Activated CD4-positive, alpha-beta memory T cell treated with anti-CD3 and anti-CD28 coated beads for 36 hours (primary cell): ENCODE measurements at regions of chr15 and their contacts with region 1.

Region 1: GRCh38 chr15:52440400-52440799 is 88.3 kb downstream of the MYO5A start:
- DNase-seq: peak; percentile 61
- H3K4me3 Mint-ChIP-seq: no peak overlapping the region
- H3K27ac Mint-ChIP-seq: no peak overlapping the region
- H3K4me1 Mint-ChIP-seq: peaks cover 42% of the 10 kb centered on the region
- H3K27me3 Mint-ChIP-seq: no peaks in the 10 kb centered on the region

Region 2: GRCh38 chr15:52408823-52409222 is 31.6 kb before region 1 on chr15:
- CTCF ChIA-PET with region 1: no interaction called
- POLR2A ChIA-PET with region 1: no interaction called
- intact Hi-C with region 1: loop called (anchors 5 kb)
- DNase-seq: no peak
- H3K4me3 Mint-ChIP-seq: no peak overlapping the region
- H3K27ac Mint-ChIP-seq: no peak overlapping the region
- H3K4me1 Mint-ChIP-seq: no peaks in the 10 kb centered on the region
- H3K27me3 Mint-ChIP-seq: no peaks in the 10 kb centered on the region